Common myeloid progenitor, CD34-positive (primary cell): ENCODE measurements at regions of chr17 and their contacts with region 1.

Region 1: GRCh38 chr17:7745748-7746470 is 28.4 kb downstream of the DNAH2 start:
- DNase-seq: peak; percentile 22 to 58 (median 55)
- H3K4me3 ChIP-seq: no peak overlapping the region
- H3K27ac ChIP-seq: no peak overlapping the region
- H3K4me1 ChIP-seq: peaks cover 0 to 9% (median 1%) of the 10 kb centered on the region in 4 experiments
- H3K27me3 ChIP-seq: no peaks in the 10 kb centered on the region

Region 2: GRCh38 chr17:7644775-7645174 is 101.1 kb before region 1 on chr17:
- CTCF ChIA-PET with region 1: no interaction called
- POLR2A ChIA-PET with region 1: no interaction called
- DNase-seq: no peak
- H3K4me3 ChIP-seq: no peak overlapping the region
- H3K27ac ChIP-seq: no peak overlapping the region
- H3K4me1 ChIP-seq: no peaks in the 10 kb centered on the region
- H3K27me3 ChIP-seq: peaks cover 0 to 3% (median 2%) of the 10 kb centered on the region in 5 experiments

Region 3: GRCh38 chr17:7782237-7782636 is 36.3 kb after region 1 on chr17:
- CTCF ChIA-PET with region 1: interaction called, 29 read pairs
- POLR2A ChIA-PET with region 1: interaction called, 3 read pairs
- DNase-seq: peak; percentile 5 to 41 (median 21)
- H3K4me3 ChIP-seq: no peak overlapping the region
- H3K27ac ChIP-seq: no peak overlapping the region
- H3K4me1 ChIP-seq: no peaks in the 10 kb centered on the region
- H3K27me3 ChIP-seq: peaks cover 0 to 6% (median 0%) of the 10 kb centered on the region in 5 experiments

Region 4: GRCh38 chr17:7818746-7819645 is 73.1 kb after region 1 on chr17:
- CTCF ChIA-PET with region 1: interaction called, 12 read pairs
- POLR2A ChIA-PET with region 1: no interaction called
- DNase-seq: no peak
- H3K4me3 ChIP-seq: no peak overlapping the region
- H3K27ac ChIP-seq: no peak overlapping the region
- H3K4me1 ChIP-seq: no peaks in the 10 kb centered on the region
- H3K27me3 ChIP-seq: no peaks in the 10 kb centered on the region

Region 5: DNA sequence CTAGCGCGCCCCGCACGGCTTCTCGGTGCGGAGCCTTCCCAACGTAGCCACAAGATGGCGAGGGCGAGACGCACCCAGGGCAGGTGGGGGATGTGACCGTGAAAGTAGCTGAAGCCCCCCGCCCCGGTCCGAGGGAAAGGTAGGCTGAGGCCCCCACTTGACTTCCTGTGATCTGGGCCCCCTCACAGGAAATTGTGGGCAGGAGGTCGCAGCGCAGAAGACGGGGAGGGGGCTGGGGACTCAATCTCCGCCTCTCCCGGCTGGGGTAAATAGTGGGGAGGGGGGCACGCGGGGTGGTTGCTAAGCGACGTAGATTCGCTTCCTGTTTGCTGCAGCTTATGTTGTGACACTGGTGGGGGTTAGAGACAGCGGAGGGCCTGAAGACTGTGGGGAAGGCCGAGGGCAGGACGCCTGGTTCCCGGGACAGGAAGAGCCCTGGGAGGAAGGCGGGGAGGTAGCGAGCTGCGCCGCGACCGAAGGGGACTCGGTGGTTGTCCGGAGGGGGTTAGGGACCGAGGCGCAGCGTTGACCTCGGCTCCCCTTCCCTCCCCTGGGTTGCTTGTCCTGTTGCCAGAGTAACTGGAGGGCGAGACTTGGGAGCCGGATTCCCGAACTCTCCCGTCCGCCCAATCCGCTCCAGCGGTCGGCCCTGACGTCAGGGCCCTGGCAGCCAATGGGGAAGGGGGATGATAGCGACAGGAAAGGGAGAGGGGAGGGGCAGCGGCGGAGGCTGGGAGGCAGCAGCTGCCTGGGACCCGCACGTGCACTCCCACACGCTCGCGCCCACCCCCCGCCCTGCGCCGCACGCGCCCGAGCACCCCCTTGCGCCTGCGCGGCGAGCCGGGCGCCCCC is 89.3 kb after region 1 on chr17:
- CTCF ChIA-PET with region 1: interaction called, 14 read pairs
- POLR2A ChIA-PET with region 1: interaction called, 3 read pairs
- DNase-seq: peak; percentile 98 to 99 (median 99)
- H3K4me3 ChIP-seq: peak overlapping the region; percentile 67 to 92 (median 82)
- H3K27ac ChIP-seq: peak overlapping the region; percentile 98 to 99
- H3K4me1 ChIP-seq: peaks cover 12 to 62% (median 52%) of the 10 kb centered on the region in 4 experiments
- H3K27me3 ChIP-seq: no peaks in the 10 kb centered on the region

Region 6: DNA sequence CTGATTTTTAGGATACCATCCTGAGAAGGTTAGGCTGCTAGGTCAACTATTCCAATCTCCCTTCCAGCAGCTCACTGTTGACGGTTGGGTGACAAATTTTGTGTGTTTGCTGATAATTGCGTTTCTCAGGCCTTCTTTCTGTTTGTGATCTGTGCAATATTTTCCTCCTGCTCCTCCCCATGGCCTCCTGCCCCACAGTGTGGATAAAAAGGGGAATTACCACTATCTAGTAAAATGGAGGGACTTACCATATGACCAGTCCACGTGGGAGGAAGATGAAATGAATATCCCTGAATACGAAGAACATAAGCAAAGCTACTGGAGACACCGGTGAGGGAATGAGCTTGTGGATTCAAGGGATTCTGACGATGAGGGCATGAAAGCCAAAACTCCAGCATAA is 151.9 kb after region 1 on chr17:
- CTCF ChIA-PET with region 1: interaction called, 12 read pairs
- POLR2A ChIA-PET with region 1: no interaction called
- DNase-seq: peak; percentile 74 to 89 (median 87)
- H3K4me3 ChIP-seq: no peak overlapping the region
- H3K27ac ChIP-seq: no peak overlapping the region
- H3K4me1 ChIP-seq: no peaks in the 10 kb centered on the region
- H3K27me3 ChIP-seq: no peaks in the 10 kb centered on the region